Colonic mucosa (tissue), 4 donors: ENCODE measurements at regions of chr2 and their contacts with region 1.

Region 1: DNA sequence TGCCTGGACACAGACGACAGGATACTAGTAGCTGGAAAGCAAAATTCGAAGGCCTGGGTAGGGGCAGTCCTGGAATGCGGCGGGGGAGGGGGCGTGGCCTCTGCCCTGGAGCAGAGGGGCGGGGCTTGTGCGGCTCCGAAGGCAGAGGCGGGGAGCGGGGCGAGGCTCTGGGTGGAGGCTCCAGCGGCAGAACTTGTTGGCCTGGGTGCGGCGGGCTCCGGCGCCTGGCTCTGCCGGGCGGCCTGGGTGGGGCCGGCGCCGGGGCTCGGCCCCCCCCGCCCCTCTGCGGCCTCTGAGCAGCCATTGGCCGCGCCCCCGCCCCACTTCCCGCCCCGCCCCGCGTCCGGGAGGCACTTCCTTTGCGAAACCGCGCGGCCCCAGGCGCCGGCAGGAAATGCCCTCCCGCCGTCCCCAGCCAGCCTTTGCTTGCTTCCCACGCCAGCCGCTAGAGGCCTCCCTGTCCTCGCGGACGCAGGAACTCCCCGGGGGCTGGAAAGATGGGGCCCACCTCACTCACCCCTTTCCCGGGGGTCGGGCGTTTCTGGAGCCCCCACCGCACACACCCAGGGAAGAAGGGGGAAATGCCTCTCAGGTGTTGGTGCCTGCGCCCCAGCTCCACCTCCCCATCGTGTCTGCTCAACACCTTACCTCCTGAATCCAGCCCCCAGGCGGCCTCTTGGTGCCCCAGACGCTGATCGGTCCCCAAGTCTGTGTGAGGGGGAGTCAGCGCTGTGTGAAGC is 6.7 kb downstream of the CTDSP1 start:
- DNase-seq: peak; percentile 98
- H3K4me3 ChIP-seq: peak overlapping the region; percentile 34
- H3K27ac ChIP-seq: peak overlapping the region; percentile 89
- H3K4me1 ChIP-seq: peaks cover 13% of the 10 kb centered on the region
- H3K27me3 ChIP-seq: no peaks in the 10 kb centered on the region
- CTCF ChIP-seq: peak; percentile 62

Region 2: DNA sequence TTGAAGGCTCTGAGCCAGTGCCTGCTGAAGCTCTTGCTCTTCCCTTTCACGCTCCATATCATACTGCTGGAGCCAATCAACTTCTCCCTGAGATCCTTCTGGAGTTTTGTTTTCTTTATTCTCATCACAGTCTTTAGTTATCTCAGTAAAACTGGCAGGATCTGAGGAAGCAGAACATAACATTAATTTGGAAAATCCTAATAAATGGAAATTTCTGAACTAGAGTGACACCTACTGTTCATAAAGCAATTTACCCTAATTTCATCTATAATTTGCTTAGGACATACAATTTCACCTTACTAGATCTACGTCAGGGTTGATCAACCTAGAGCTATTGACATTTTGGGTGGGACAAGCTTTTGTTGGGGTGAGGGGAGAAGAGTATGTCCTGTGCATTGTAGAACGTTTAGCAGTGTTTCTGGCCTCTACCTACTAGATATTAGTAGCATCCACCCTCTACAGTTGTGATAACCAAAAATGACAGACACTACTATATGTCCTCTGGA is 59.7 kb after region 1 on chr2:
- intact Hi-C with region 1: loop called (anchors 5 kb)
- DNase-seq: no peak
- H3K4me3 ChIP-seq: no peak overlapping the region
- H3K27ac ChIP-seq: no peak overlapping the region
- H3K4me1 ChIP-seq: no peaks in the 10 kb centered on the region
- H3K27me3 ChIP-seq: no peaks in the 10 kb centered on the region
- CTCF ChIP-seq: no peak

Region 3: GRCh38 chr2:218648088-218648786 is 241.9 kb after region 1 on chr2:
- intact Hi-C with region 1: loop called (anchors 10 kb)
- DNase-seq: peak; percentile 53
- H3K4me3 ChIP-seq: no peak overlapping the region
- H3K27ac ChIP-seq: no peak overlapping the region
- H3K4me1 ChIP-seq: no peaks in the 10 kb centered on the region
- H3K27me3 ChIP-seq: no peaks in the 10 kb centered on the region
- CTCF ChIP-seq: peak; percentile 85